ENCODE measurements at regions of chr4 and their contacts with region 1.

Region 1: GRCh38 chr4:33722800-33723516 is 2521.4 kb downstream of the ARAP2 start:
- DNase-seq: no peak
- H3K4me3 ChIP-seq: no peak overlapping the region
- H3K27ac ChIP-seq: no peak overlapping the region
- H3K4me1 ChIP-seq: no peaks in the 10 kb centered on the region
- H3K27me3 ChIP-seq: no peaks in the 10 kb centered on the region
- CTCF ChIP-seq: no peak; the same call in 1 of the 2 replicates

Region 2: GRCh38 chr4:33625748-33626147 is 97.2 kb before region 1 on chr4:
- CTCF ChIA-PET with region 1: no interaction called
- POLR2A ChIA-PET with region 1: no interaction called
- intact Hi-C with region 1: no loop called
- DNase-seq: no peak
- H3K4me3 ChIP-seq: no peak overlapping the region
- H3K27ac ChIP-seq: no peak overlapping the region
- H3K4me1 ChIP-seq: no peaks in the 10 kb centered on the region
- H3K27me3 ChIP-seq: no peaks in the 10 kb centered on the region
- CTCF ChIP-seq: no peak

Region 3: GRCh38 chr4:33980361-33980760 is 257.4 kb after region 1 on chr4:
- CTCF ChIA-PET with region 1: no interaction called
- POLR2A ChIA-PET with region 1: interaction called, 13 read pairs
- intact Hi-C with region 1: no loop called
- DNase-seq: no peak
- H3K4me3 ChIP-seq: no peak overlapping the region
- H3K27ac ChIP-seq: no peak overlapping the region
- H3K4me1 ChIP-seq: no peaks in the 10 kb centered on the region
- H3K27me3 ChIP-seq: no peaks in the 10 kb centered on the region
- CTCF ChIP-seq: no peak

Measured in PC-9 (cell line).